Activated CD8-positive, alpha-beta T cell treated with anti-CD3 and anti-CD28 coated beads, Interleukin-2, amount 10 ng/mL, durations not matched to agents 7 days and 5 days (primary cell): ENCODE measurements at regions of chr9 and their contacts with region 1.

Region 1: GRCh38 chr9:20941174-20941690 is 90.2 kb downstream of the HACD4 start:
- DNase-seq: peak; percentile 72
- ATAC-seq: peak; percentile 99
- H3K4me3 Mint-ChIP-seq: no peak overlapping the region
- H3K27ac Mint-ChIP-seq: peak overlapping the region; percentile 9
- H3K4me1 Mint-ChIP-seq: peaks cover 5% of the 10 kb centered on the region
- H3K27me3 Mint-ChIP-seq: no peaks in the 10 kb centered on the region

Region 2: GRCh38 chr9:19946441-19947109 is 994.7 kb before region 1 on chr9:
- CTCF ChIA-PET with region 1: interaction called, 17 read pairs
- POLR2A ChIA-PET with region 1: no interaction called
- DNase-seq: peak; percentile 64
- ATAC-seq: peak; percentile 79
- H3K4me3 Mint-ChIP-seq: no peak overlapping the region
- H3K27ac Mint-ChIP-seq: peak overlapping the region; percentile 81
- H3K4me1 Mint-ChIP-seq: peaks cover 31% of the 10 kb centered on the region
- H3K27me3 Mint-ChIP-seq: peaks cover 19% of the 10 kb centered on the region

Region 3: GRCh38 chr9:20693068-20693467 is 248.2 kb before region 1 on chr9:
- CTCF ChIA-PET with region 1: no interaction called
- POLR2A ChIA-PET with region 1: no interaction called
- DNase-seq: no peak
- ATAC-seq: no peak
- H3K4me3 Mint-ChIP-seq: no peak overlapping the region
- H3K27ac Mint-ChIP-seq: no peak overlapping the region
- H3K4me1 Mint-ChIP-seq: peaks cover 4% of the 10 kb centered on the region
- H3K27me3 Mint-ChIP-seq: no peaks in the 10 kb centered on the region

Region 4: GRCh38 chr9:20884985-20885593 is 56.1 kb before region 1 on chr9:
- CTCF ChIA-PET with region 1: interaction called, 33 read pairs
- POLR2A ChIA-PET with region 1: no interaction called
- DNase-seq: peak; percentile 75
- ATAC-seq: peak; percentile 47
- H3K4me3 Mint-ChIP-seq: no peak overlapping the region
- H3K27ac Mint-ChIP-seq: no peak overlapping the region
- H3K4me1 Mint-ChIP-seq: no peaks in the 10 kb centered on the region
- H3K27me3 Mint-ChIP-seq: no peaks in the 10 kb centered on the region

Region 5: DNA sequence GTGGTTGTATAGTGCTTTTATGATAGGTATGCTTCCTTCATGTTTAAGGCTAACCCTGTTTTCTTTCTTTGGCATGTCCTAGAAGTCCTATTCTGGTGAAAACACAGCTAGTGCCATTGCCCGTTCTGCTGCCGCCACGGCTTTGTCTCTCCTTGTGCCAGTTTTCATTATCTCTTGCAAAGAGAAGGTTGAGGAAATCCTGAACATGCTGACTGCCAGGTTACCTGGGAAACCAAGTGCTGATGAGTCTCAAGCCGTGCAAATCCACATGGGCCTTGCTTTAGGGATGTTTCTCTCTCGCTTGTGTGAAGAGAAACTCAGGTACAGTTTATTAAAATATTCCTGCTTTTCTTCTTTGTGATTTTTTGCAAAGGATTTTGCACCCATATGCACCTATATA is 12.0 kb before region 1 on chr9:
- CTCF ChIA-PET with region 1: interaction called, 34 read pairs
- POLR2A ChIA-PET with region 1: no interaction called
- DNase-seq: no peak
- ATAC-seq: no peak
- H3K4me3 Mint-ChIP-seq: no peak overlapping the region
- H3K27ac Mint-ChIP-seq: no peak overlapping the region
- H3K4me1 Mint-ChIP-seq: peaks cover 23% of the 10 kb centered on the region
- H3K27me3 Mint-ChIP-seq: no peaks in the 10 kb centered on the region